ENCODE measurements at regions of chr14 and their contacts with region 1.

Region 1: GRCh38 chr14:23562268-23563203 is 5.1 kb downstream of the AP1G2 start:
- DNase-seq: peak; percentile 74
- H3K4me3 ChIP-seq: no peak overlapping the region
- H3K27ac ChIP-seq: no peak overlapping the region
- H3K4me1 ChIP-seq: peaks cover 0 to 21% (median 15%) of the 10 kb centered on the region in 4 donors
- H3K27me3 ChIP-seq: no peaks in the 10 kb centered on the region
- CTCF ChIP-seq: peak; percentile 76 to 96 (median 90)
- EP300 ChIP-seq: no peak
- POLR2A ChIP-seq: no peak

Region 2: DNA sequence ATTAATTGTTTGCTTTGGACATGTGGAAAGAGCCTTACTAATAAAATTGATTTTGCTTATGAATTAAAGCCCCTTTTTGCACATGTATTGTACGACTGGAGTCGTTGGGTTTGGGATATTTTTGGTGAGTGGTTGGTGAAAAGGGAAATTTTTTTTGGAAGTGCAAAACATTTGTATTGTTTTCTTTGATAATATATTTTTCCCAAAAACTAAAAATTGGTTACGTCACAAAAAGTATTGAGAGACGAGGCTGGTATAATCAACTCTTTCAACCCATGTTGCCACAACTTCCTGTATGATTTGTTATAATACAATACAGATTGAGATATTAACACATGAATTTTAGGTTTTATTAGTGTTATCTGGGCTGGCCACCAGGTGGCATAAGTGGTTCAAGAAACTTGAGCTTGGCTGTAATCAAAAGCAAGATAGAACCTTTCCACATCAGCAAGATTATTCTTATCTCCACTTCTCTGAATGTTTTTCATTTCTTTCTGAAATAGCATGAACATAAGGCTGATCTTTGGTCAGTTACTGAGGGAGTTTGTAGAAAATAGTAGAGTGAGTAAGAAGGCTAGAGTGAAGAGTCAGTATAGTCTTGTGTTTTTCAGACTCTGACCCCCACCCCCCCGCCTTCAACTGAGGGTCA is 84.3 kb before region 1 on chr14:
- intact Hi-C with region 1: loop called (anchors 1 kb)
- DNase-seq: no peak
- H3K4me3 ChIP-seq: no peak overlapping the region
- H3K27ac ChIP-seq: no peak overlapping the region
- H3K4me1 ChIP-seq: no peaks in the 10 kb centered on the region
- H3K27me3 ChIP-seq: no peaks in the 10 kb centered on the region
- CTCF ChIP-seq: peak in 3 of 4 experiments; percentile 67 to 68 (median 67)
- EP300 ChIP-seq: no peak
- POLR2A ChIP-seq: no peak

Measured in sigmoid colon (tissue), 7 donors.